Activated B cell treated with CpG ODN at 0.5 μM for 24 hours (primary cell): ENCODE measurements at regions of chr10 and their contacts with region 1.

Region 1: GRCh38 chr10:72337020-72337629 is 17.6 kb downstream of the DNAJB12 start:
- DNase-seq: peak; percentile 72
- ATAC-seq: peak; percentile 13
- H3K4me3 Mint-ChIP-seq: no peak overlapping the region
- H3K27ac Mint-ChIP-seq: no peak overlapping the region
- H3K4me1 Mint-ChIP-seq: peaks cover 62% of the 10 kb centered on the region
- H3K27me3 Mint-ChIP-seq: no peaks in the 10 kb centered on the region
- CTCF ChIP-seq: peak; percentile 79

Region 2: GRCh38 chr10:71383972-71384687 is 953.0 kb before region 1 on chr10:
- CTCF ChIA-PET with region 1: no interaction called
- POLR2A ChIA-PET with region 1: no interaction called
- intact Hi-C with region 1: loop called (anchors 5 kb)
- DNase-seq: peak; percentile 82
- ATAC-seq: peak; percentile 100
- H3K4me3 Mint-ChIP-seq: no peak overlapping the region
- H3K27ac Mint-ChIP-seq: no peak overlapping the region
- H3K4me1 Mint-ChIP-seq: peaks cover 7% of the 10 kb centered on the region
- H3K27me3 Mint-ChIP-seq: peaks cover 3% of the 10 kb centered on the region
- CTCF ChIP-seq: no peak

Region 3: DNA sequence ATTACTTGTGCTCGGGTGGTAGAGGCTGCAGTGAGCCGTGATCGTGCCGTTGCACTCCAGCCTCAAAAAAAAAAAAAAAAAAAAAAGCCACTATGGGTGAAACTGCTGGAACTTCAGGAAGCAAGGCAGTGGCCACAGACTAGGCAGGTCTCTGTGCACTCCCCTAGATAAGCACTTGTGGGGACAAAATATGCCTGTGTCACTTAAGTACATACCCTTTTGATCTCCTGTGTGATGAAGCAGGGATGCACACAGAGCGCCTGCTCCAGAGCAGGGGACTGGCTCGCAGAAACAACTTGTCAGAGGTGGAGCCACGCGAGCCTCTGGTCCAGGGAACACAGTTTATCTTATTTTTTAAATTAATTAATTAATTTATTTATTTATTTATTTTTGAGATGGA is 443.2 kb before region 1 on chr10:
- CTCF ChIA-PET with region 1: interaction called, 14 read pairs
- POLR2A ChIA-PET with region 1: interaction called, 3 read pairs
- intact Hi-C with region 1: loop called (anchors 1 kb)
- DNase-seq: no peak
- ATAC-seq: no peak
- H3K4me3 Mint-ChIP-seq: no peak overlapping the region
- H3K27ac Mint-ChIP-seq: no peak overlapping the region
- H3K4me1 Mint-ChIP-seq: peaks cover 20% of the 10 kb centered on the region
- H3K27me3 Mint-ChIP-seq: peaks cover 2% of the 10 kb centered on the region
- CTCF ChIP-seq: no peak

Region 4: DNA sequence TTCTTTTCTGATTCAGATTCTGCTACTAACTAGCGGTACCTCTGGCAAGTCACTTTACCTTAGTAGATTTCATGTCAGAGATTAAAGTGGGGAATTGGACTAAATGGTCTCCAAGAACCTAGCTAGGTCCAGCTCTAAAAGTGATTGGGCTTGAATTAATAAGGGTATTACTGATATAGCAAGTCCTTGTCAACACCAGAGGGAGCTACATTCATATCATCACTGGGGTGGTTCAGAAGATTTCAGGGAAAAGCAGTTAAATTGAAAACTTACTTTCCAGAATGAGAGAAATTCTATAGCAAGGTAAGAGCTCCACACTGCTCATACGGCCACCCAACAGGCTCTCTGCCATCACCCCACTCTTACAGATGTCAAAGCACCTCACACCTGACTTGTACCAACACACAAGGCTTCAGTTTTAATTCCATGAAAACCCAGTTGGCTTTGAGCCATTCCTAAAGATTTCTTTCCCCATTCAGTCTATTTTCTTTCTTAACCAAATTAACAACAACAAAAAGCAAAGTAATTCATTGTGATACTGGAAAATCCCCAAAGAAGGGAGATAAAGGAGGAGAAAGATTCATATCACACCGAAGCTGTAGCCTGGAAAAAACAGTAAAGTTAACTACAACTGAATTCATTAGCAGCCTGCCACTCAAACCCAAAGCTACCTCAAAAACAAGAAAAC is 210.8 kb before region 1 on chr10:
- CTCF ChIA-PET with region 1: interaction called, 172 read pairs
- POLR2A ChIA-PET with region 1: interaction called, 9 read pairs
- intact Hi-C with region 1: loop called (anchors 1 kb)
- DNase-seq: no peak
- ATAC-seq: no peak
- H3K4me3 Mint-ChIP-seq: no peak overlapping the region
- H3K27ac Mint-ChIP-seq: peak overlapping the region; percentile 42
- H3K4me1 Mint-ChIP-seq: peaks cover 2% of the 10 kb centered on the region
- H3K27me3 Mint-ChIP-seq: no peaks in the 10 kb centered on the region
- CTCF ChIP-seq: no peak

Region 5: GRCh38 chr10:72248468-72249151 is 88.5 kb before region 1 on chr10:
- CTCF ChIA-PET with region 1: interaction called, 10 read pairs
- POLR2A ChIA-PET with region 1: interaction called, 20 read pairs
- intact Hi-C with region 1: loop called (anchors 1 kb)
- DNase-seq: peak; percentile 54
- ATAC-seq: peak; percentile 78
- H3K4me3 Mint-ChIP-seq: peak overlapping the region; percentile 74
- H3K27ac Mint-ChIP-seq: peak overlapping the region; percentile 97
- H3K4me1 Mint-ChIP-seq: peaks cover 85% of the 10 kb centered on the region
- H3K27me3 Mint-ChIP-seq: no peaks in the 10 kb centered on the region
- CTCF ChIP-seq: no peak